ENCODE measurements at regions of chr18 and their contacts with region 1.

Region 1: GRCh38 chr18:5879479-5879882 is 15.8 kb downstream of the TMEM200C start:
- DNase-seq: no peak
- ATAC-seq: no peak
- H3K4me3 ChIP-seq: no peak overlapping the region
- H3K27ac ChIP-seq: no peak overlapping the region
- H3K4me1 ChIP-seq: no peaks in the 10 kb centered on the region
- H3K27me3 ChIP-seq: no peaks in the 10 kb centered on the region

Region 2: DNA sequence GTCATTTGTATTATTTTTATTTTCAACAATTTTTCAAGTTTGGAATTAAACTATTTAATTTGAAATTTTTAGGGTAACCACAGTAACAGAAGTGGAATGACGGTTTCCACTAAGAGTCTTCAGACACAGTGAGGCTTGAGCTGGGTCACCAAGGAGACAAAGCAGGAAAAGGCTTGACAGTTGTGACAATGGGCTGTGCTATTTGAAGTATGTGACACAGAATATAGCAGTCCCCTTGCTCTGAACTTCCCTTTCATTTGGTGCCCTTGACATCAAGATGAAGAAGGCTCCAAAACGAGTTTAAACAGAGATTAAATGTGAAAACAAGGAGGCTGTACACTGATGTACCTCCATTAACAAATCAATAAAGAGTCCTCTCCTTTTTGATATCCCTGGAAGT is 1159.0 kb before region 1 on chr18:
- intact Hi-C with region 1: no loop called
- DNase-seq: no peak
- ATAC-seq: no peak
- H3K4me3 ChIP-seq: no peak overlapping the region
- H3K27ac ChIP-seq: no peak overlapping the region
- H3K4me1 ChIP-seq: no peaks in the 10 kb centered on the region
- H3K27me3 ChIP-seq: no peaks in the 10 kb centered on the region

Region 3: GRCh38 chr18:6056146-6056932 is 176.9 kb after region 1 on chr18:
- intact Hi-C with region 1: no loop called
- DNase-seq: no peak
- ATAC-seq: no peak
- H3K4me3 ChIP-seq: no peak overlapping the region
- H3K27ac ChIP-seq: peak overlapping the region; percentile 67
- H3K4me1 ChIP-seq: peaks cover 7% of the 10 kb centered on the region
- H3K27me3 ChIP-seq: no peaks in the 10 kb centered on the region

Region 4: DNA sequence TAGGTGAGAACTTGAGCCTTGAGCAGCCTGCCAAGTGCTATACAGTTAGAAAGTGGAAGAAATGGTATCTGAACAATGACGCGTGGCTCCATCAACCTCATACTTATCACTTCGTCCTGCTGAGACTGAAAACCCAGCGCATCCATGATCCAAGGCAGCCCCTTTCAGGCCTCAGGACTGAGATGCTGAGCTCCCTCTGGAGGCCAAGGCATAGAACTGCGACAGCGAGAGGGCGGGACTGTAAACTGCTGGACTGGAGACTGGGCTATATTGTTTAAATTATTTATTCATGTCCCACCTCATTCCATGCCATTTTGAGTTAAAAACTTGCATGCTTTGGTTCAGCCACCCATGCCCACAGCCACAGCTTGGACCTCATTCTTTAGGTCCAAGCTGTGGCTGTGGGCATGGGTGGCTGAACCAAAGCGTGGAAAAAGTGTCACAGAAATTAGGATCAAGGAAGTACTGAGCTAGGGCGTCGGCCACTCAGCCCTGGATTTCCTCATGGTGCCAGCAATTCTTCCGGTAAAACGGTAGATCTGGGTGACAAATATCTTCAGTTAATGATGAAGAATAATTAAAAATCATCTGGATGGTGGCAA is 339.7 kb after region 1 on chr18:
- intact Hi-C with region 1: loop called in 2 of 4 experiments (anchors 10 kb)
- DNase-seq: peak in 1 of 3 donors; percentile 38
- ATAC-seq: peak; percentile 48 to 61
- H3K4me3 ChIP-seq: no peak overlapping the region
- H3K27ac ChIP-seq: no peak overlapping the region
- H3K4me1 ChIP-seq: no peaks in the 10 kb centered on the region
- H3K27me3 ChIP-seq: no peaks in the 10 kb centered on the region

Region 5: DNA sequence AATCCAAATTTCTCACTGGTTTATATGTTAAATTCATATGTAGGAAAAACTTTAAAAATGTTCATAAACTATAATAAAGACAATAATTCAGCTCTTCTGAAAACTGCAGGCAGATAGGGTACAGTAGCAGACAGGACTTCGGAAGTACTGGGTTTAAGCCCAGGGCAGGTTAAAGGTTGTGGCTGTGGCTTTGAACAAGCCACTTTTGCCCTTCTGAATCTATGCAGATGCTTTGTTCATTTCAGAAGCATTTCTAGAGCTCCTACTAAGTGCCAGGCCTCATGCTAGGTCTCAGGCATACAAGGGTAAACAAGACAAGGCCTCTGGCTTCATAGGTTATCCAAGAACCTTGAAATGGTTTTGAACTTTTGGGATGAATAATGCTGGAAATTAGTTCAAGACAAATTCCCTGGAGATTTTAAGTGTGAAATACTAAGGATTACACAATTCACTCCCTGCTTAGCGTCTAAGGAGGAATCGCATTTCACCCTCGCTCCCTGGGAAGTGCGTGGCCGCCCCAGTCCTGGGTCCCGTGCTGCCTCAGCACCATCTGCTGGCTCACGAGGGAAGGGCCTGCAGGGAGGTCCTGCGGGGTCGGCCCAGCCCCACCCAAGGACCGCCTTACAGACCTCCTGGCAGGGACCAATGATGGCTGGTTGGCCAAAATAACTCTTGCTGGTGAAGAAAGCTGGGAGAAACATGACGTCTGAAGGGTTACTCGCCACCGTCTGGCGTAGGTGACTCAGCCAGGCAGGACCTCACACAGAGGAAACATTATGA is 602.9 kb after region 1 on chr18:
- intact Hi-C with region 1: loop called (anchors 2 to 10 kb)
- DNase-seq: peak; percentile 90 to 93 (median 92)
- ATAC-seq: peak; percentile 99 to 100
- H3K4me3 ChIP-seq: no peak overlapping the region
- H3K27ac ChIP-seq: no peak overlapping the region
- H3K4me1 ChIP-seq: no peaks in the 10 kb centered on the region
- H3K27me3 ChIP-seq: no peaks in the 10 kb centered on the region

Region 6: DNA sequence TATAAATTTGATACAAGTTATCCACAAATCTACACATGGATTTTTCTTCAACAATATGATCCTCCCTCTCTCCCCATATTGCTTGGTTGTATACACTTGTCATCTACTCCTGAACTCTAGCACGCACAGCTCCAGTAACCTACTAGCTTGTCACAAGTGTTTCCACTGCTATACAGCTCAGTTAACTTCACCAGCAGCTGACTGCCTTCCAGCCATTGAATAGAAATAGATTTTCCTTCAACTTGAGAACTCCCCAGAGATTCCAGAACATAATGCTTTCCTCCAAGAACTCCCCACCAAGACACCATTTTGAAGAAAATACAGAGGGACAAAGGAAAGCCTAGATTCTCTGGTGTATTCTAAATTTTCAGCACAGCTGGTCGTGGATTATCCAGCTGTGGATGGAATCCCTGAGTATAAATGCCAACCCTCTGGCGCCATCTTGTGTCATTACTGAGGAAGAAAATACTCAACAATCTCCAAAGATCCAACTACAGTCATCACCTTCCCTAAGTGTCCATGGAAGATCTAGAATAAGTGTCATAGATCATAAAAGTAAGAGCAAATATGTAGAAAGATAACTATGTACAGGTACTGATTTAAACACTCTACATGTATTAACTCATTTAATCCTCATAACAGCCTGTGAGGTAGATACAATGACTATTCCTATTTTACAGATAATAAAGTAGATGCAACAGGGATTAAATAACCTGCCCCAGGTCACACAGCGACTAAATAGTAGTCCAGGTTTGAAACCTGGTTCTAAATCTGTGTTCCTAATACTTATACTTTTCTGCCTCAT is 1006.7 kb after region 1 on chr18:
- intact Hi-C with region 1: loop called in 2 of 4 experiments (anchors 10 kb)
- DNase-seq: peak in 2 of 3 donors; percentile 26 to 39
- ATAC-seq: peak; percentile 66 to 86
- H3K4me3 ChIP-seq: no peak overlapping the region
- H3K27ac ChIP-seq: no peak overlapping the region
- H3K4me1 ChIP-seq: no peaks in the 10 kb centered on the region
- H3K27me3 ChIP-seq: no peaks in the 10 kb centered on the region